ENCODE measurements at regions of chr15 and their contacts with region 1.

Region 1: GRCh38 chr15:99076552-99077308 is 28.1 kb upstream of the SYNM start:
- DNase-seq: peak; percentile 72
- H3K4me3 ChIP-seq: peak overlapping the region in 2 of 3 experiments; percentile 19 to 22
- H3K27ac ChIP-seq: no peak overlapping the region
- H3K4me1 ChIP-seq: no peaks in the 10 kb centered on the region
- H3K27me3 ChIP-seq: no peaks in the 10 kb centered on the region
- CTCF ChIP-seq: peak; percentile 90 to 95

Region 2: GRCh38 chr15:98428253-98428989 is 648.3 kb before region 1 on chr15:
- CTCF ChIA-PET with region 1: no interaction called
- dilution Hi-C with region 1: no loop called
- in situ Hi-C with region 1: no loop called
- intact Hi-C with region 1: loop called (anchors 5 kb)
- DNase-seq: peak; percentile 74
- H3K4me3 ChIP-seq: peak overlapping the region; percentile 23 to 56 (median 54)
- H3K27ac ChIP-seq: no peak overlapping the region
- H3K4me1 ChIP-seq: no peaks in the 10 kb centered on the region
- H3K27me3 ChIP-seq: peaks cover 6% of the 10 kb centered on the region
- CTCF ChIP-seq: peak; percentile 46 to 74

Region 3: DNA sequence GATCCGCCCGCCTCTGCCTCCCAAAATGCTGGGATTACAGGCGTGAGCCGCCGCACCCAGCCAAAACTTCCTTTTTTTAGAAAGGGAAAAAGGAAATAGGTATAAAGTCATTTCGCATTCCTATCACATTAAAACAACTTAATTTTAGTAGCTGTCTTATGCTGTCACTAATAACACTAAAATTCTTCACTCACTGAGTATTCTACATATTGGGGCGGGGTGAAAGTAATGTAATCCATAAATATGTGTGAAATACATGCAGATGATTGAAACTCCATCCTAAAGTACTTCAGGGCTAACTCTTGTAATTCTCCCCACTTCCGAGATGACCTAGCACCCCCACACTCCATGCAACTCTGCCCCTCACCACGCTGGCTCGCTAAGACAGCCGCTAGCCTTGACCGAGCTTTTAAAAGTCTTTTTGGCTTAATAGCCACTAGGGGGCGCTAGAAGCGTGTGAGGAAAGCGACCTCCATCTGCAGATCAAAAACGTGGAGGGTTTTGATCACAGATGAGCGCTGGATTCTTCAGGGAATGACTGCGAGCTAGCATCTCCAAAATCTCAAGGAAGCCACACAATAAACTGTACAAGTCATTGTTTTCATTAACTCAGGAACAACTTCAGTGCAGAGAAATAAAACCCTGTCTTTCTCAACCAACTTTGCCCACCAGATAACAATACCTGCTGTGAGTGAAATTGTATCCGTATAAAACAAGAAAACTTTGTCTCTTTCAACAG is 557.7 kb before region 1 on chr15:
- CTCF ChIA-PET with region 1: interaction called, 5 read pairs
- dilution Hi-C with region 1: no loop called
- in situ Hi-C with region 1: loop called in 1 of 2 experiments (anchors 5 kb)
- intact Hi-C with region 1: loop called (anchors 1 kb)
- DNase-seq: peak; percentile 57
- H3K4me3 ChIP-seq: no peak overlapping the region
- H3K27ac ChIP-seq: no peak overlapping the region
- H3K4me1 ChIP-seq: no peaks in the 10 kb centered on the region
- H3K27me3 ChIP-seq: no peaks in the 10 kb centered on the region
- CTCF ChIP-seq: peak; percentile 63 to 83

Region 4: DNA sequence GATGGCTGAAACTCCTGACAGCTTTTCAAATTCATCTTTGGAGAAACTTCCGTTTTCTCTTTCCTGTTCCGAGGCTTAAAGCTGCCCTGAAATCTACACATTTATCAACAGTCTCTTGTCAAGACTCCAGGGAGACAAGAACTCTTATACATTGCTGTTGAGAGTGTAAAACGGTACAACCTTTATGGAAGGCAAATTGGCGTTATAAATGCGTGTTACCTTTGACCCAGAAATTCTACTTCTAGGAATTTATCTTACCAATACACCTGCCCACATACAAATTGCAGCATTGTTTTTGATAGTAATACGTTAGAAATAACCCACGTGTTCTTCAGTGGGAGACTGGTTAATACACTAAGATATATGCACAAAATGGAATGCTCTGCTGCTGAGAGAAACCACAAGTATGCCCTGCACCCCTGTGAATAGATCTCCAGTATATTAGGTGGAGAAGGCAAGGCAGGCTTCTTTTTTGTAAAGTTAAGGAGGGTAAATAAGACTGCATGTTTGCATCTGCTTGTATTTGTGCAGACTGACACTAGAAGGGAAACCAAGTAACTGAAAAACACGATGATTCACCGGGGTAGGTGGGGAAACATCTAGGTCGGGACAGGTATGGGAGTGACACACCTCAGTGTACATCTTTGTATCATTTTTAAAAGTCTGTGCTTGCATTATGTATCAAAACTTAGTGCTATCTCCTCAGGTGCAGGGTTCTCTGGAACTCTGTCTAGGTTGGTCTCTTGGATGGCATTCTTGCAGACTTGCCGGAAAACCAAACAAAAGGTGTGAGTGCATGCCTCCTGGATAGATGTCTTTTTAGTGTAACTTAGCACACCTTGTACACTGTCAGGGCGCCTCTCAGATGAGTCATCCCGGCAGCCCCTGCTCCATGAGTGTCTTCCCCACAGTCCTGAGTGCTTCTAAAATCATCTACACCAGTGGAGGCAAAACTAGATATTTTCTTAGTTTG is 330.8 kb before region 1 on chr15:
- CTCF ChIA-PET with region 1: no interaction called
- dilution Hi-C with region 1: no loop called
- in situ Hi-C with region 1: no loop called
- intact Hi-C with region 1: no loop called
- DNase-seq: peak; percentile 76
- H3K4me3 ChIP-seq: no peak overlapping the region
- H3K27ac ChIP-seq: peak overlapping the region; percentile 84
- H3K4me1 ChIP-seq: peaks cover 48% of the 10 kb centered on the region
- H3K27me3 ChIP-seq: no peaks in the 10 kb centered on the region
- CTCF ChIP-seq: no peak

Region 5: GRCh38 chr15:98779463-98780071 is 297.2 kb before region 1 on chr15:
- CTCF ChIA-PET with region 1: no interaction called
- dilution Hi-C with region 1: no loop called
- in situ Hi-C with region 1: no loop called
- intact Hi-C with region 1: loop called (anchors 5 kb)
- DNase-seq: peak; percentile 74
- H3K4me3 ChIP-seq: no peak overlapping the region
- H3K27ac ChIP-seq: peak overlapping the region; percentile 10
- H3K4me1 ChIP-seq: peaks cover 34% of the 10 kb centered on the region
- H3K27me3 ChIP-seq: no peaks in the 10 kb centered on the region
- CTCF ChIP-seq: peak; percentile 97

Region 6: DNA sequence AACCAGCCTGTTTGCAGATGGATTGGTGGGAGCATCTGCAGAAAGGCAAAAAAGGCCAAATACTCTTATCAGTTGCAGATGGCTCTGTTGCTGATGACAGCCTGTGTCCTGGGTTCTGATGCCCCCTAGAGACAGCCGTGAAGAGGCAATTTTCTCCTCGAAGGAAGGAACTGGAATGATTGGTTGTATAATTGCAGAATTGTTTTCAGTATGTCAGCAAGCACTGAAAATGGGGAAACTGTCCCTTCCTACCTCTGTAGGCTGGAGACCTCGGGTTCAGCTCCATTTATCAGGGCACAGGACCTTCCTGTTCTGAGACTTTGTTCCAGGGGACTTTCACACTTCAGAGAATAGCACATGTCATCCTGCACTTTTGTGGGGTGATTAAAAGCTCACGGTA is 172.2 kb before region 1 on chr15:
- CTCF ChIA-PET with region 1: no interaction called
- dilution Hi-C with region 1: no loop called
- in situ Hi-C with region 1: loop called in 1 of 2 experiments (anchors 25 kb)
- intact Hi-C with region 1: loop called (anchors 1 kb)
- DNase-seq: peak; percentile 52
- H3K4me3 ChIP-seq: no peak overlapping the region
- H3K27ac ChIP-seq: peak overlapping the region; percentile 94
- H3K4me1 ChIP-seq: peaks cover 69% of the 10 kb centered on the region
- H3K27me3 ChIP-seq: no peaks in the 10 kb centered on the region
- CTCF ChIP-seq: peak; percentile 67 to 84

Region 7: DNA sequence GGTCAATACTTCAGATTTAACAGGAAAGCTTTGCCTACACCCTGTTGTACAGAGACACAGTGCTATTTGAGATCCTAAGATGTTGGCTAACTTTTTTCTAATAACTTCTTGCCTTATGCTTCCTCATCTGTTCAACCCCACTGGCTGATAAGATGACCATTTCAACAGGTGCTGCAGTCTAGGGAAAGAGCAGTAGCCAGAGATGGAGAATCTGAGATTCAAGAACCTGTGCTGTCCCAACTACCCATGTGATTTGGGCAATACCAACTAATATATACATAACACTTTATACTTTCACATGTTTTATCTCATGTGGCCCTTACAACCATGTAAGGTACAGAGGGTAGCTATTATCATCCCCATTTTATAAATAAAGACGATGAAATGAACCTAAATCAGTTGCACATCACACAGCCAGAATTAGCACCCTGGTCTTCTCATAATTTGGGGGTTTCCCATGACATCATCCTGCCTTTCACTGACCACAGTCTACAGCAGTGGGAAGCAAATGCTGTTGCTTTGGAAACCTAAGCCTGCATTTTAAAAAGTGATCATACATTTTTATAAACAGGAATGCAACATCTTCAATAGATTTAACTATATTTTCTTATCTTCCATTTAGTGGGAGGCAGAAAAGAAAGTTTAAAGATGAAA is 162.9 kb after region 1 on chr15:
- CTCF ChIA-PET with region 1: no interaction called
- dilution Hi-C with region 1: no loop called
- in situ Hi-C with region 1: no loop called
- intact Hi-C with region 1: no loop called
- DNase-seq: no peak
- H3K4me3 ChIP-seq: no peak overlapping the region
- H3K27ac ChIP-seq: no peak overlapping the region
- H3K4me1 ChIP-seq: no peaks in the 10 kb centered on the region
- H3K27me3 ChIP-seq: no peaks in the 10 kb centered on the region
- CTCF ChIP-seq: no peak

Region 8: GRCh38 chr15:99335508-99335907 is 258.8 kb after region 1 on chr15:
- CTCF ChIA-PET with region 1: no interaction called
- dilution Hi-C with region 1: no loop called
- in situ Hi-C with region 1: no loop called
- intact Hi-C with region 1: no loop called
- DNase-seq: no peak
- H3K4me3 ChIP-seq: no peak overlapping the region
- H3K27ac ChIP-seq: no peak overlapping the region
- H3K4me1 ChIP-seq: no peaks in the 10 kb centered on the region
- H3K27me3 ChIP-seq: no peaks in the 10 kb centered on the region
- CTCF ChIP-seq: no peak

Region 9: DNA sequence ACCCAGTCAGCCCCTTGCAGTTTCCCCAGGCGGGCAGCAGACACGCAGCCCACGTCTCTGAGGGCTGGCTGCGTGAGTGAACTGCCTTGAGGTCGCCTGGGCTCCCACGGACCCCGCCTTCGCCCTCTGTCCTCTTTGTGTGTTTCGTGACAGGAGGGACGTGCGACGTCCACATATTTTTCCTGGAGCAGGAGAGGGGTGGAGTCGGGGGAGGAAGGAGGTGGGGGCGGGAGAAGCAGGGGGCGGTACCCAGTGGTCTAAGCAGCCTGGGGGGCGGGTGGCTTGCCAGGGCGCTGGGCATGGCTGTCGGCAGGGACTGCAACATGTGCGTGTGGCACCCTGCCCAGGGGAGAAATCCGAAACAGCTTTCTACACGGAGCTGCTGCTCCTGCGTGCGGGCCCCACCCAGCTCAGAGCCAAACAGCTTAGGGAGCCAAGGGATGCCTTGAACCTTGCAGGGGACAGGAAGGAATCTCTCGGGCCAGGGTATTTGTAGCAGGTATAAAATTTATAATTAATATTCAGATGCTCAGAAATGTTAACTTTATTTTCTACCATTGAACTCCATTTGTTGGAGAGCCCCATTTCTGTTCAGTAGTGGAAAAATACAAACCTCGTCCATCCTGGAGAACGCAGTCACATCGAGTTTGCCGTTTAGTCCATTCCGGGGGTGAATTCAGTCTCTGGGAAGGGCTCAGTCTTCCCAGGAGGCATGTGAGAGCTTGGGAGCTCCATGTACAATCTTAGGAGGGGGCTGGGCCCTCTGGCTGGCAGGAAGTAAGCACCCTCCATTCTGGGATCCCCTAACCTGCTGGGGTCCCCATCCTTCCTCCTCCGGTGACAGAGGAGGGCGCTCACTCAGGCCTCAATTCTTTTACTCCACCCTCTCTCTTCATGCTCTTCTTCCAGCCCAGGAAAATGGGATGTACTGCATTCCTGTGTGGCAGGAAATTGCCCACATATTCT is 409.9 kb after region 1 on chr15:
- CTCF ChIA-PET with region 1: no interaction called
- dilution Hi-C with region 1: no loop called
- in situ Hi-C with region 1: no loop called
- intact Hi-C with region 1: no loop called
- DNase-seq: peak; percentile 23
- H3K4me3 ChIP-seq: peak overlapping the region; percentile 0 to 28 (median 24)
- H3K27ac ChIP-seq: peak overlapping the region; percentile 14
- H3K4me1 ChIP-seq: peaks cover 14% of the 10 kb centered on the region
- H3K27me3 ChIP-seq: no peaks in the 10 kb centered on the region
- CTCF ChIP-seq: no peak

Measured in mammary epithelial cell (primary cell).